CD4-positive, alpha-beta memory T cell (primary cell): ENCODE measurements at regions of chr4 and their contacts with region 1.

Region 1: DNA sequence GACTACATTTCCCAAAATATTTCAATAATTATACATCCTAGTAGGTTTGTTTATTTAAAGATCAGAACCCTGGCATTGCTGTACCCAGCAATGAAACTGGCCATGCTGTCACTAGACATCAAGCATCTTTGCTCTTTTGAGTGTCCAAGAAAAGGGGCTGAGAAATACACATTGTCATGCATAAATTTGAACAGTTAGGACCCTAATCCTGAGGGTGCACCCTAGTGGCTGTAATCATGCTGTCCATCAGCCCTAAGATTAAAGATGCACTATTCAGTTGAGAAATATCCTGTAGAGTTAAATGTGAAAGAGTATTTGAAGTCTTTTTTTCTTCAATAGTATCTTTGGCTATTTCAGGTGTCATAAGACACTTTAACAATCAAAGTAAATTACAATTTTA is 108.8 kb downstream of the NFKB1 start:
- DNase-seq: no peak
- H3K4me3 ChIP-seq: no peak overlapping the region
- H3K4me3 Mint-ChIP-seq: peak overlapping the region in 5 of 8 donors; percentile 1 to 83 (median 44)
- H3K27ac ChIP-seq: no peak overlapping the region
- H3K27ac Mint-ChIP-seq: peak overlapping the region; percentile 18 to 99 (median 94)
- H3K4me1 ChIP-seq: peaks cover 84% of the 10 kb centered on the region
- H3K4me1 Mint-ChIP-seq: peaks cover 54 to 95% (median 76%) of the 10 kb centered on the region in 4 donors
- H3K27me3 ChIP-seq: no peaks in the 10 kb centered on the region
- H3K27me3 Mint-ChIP-seq: no peaks in the 10 kb centered on the region

Region 2: DNA sequence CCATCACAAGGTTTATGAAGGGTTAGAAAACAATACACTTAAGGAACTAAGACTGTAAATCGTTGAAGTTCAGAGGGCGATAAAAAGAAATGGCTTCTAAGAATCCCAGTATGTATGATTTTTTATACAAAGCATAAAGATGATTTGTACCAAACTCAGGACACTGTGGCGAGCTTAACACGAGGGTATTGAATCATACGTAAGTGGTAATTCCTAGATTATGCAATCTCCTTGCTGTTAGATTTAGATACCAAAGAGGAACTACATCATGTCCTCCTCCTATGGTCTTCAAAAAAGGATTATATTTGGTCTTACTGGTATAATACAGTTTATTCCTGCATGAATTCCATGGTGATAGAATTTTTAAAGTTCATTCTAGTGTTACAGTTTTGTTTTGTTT is 84.9 kb before region 1 on chr4:
- CTCF ChIA-PET with region 1: interaction called, 5 read pairs
- POLR2A ChIA-PET with region 1: interaction called, 11 read pairs
- intact Hi-C with region 1: no loop called
- DNase-seq: no peak
- H3K4me3 ChIP-seq: no peak overlapping the region
- H3K4me3 Mint-ChIP-seq: peak overlapping the region in 2 of 8 donors; percentile 10 to 57
- H3K27ac ChIP-seq: no peak overlapping the region
- H3K27ac Mint-ChIP-seq: peak overlapping the region in 6 of 7 donors; percentile 16 to 65 (median 51)
- H3K4me1 ChIP-seq: peaks cover 90% of the 10 kb centered on the region
- H3K4me1 Mint-ChIP-seq: peaks cover 59 to 94% (median 70%) of the 10 kb centered on the region in 4 donors
- H3K27me3 ChIP-seq: no peaks in the 10 kb centered on the region
- H3K27me3 Mint-ChIP-seq: no peaks in the 10 kb centered on the region

Region 3: DNA sequence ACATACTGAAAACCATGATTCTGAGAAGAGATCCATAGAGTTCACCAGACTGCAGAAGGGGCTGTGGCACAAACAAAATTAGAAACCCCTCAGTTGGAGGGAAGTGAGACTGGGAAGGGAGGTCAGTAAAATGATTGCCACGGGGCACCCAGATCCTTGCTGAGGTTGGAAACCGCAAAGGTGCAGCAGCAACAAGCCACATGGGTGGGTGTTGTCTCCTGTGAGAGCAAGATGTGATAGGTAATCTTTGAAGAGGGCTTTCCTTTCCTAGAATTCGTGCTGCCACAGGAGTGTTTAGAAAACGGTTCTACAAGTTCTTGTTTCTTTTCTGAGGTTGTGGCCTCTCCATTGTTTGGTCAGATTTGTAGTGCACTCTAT is 23.4 kb before region 1 on chr4:
- CTCF ChIA-PET with region 1: interaction called, 6 read pairs
- POLR2A ChIA-PET with region 1: interaction called, 54 read pairs
- intact Hi-C with region 1: no loop called
- DNase-seq: peak; percentile 26 to 57 (median 39)
- H3K4me3 ChIP-seq: no peak overlapping the region
- H3K4me3 Mint-ChIP-seq: peak overlapping the region in 7 of 8 donors; percentile 53 to 81 (median 71)
- H3K27ac ChIP-seq: peak overlapping the region; percentile 25
- H3K27ac Mint-ChIP-seq: peak overlapping the region; percentile 72 to 96 (median 85)
- H3K4me1 ChIP-seq: peaks cover 73% of the 10 kb centered on the region
- H3K4me1 Mint-ChIP-seq: peaks cover 60 to 88% (median 72%) of the 10 kb centered on the region in 4 donors
- H3K27me3 ChIP-seq: no peaks in the 10 kb centered on the region
- H3K27me3 Mint-ChIP-seq: no peaks in the 10 kb centered on the region

Region 4: GRCh38 chr4:102620697-102621497 is 10.9 kb after region 1 on chr4:
- CTCF ChIA-PET with region 1: interaction called, 16 read pairs
- POLR2A ChIA-PET with region 1: interaction called, 19 read pairs
- intact Hi-C with region 1: loop called (anchors 1 kb)
- DNase-seq: peak in 2 of 5 donors; percentile 27 to 35
- H3K4me3 ChIP-seq: no peak overlapping the region
- H3K4me3 Mint-ChIP-seq: peak overlapping the region in 1 of 8 donors; percentile 40
- H3K27ac ChIP-seq: no peak overlapping the region
- H3K27ac Mint-ChIP-seq: peak overlapping the region in 5 of 7 donors; percentile 20 to 82 (median 80)
- H3K4me1 ChIP-seq: peaks cover 18% of the 10 kb centered on the region
- H3K4me1 Mint-ChIP-seq: peaks cover 19 to 70% (median 40%) of the 10 kb centered on the region in 4 donors
- H3K27me3 ChIP-seq: no peaks in the 10 kb centered on the region
- H3K27me3 Mint-ChIP-seq: no peaks in the 10 kb centered on the region